HEK293T (cell line): ENCODE measurements at regions of chr1 and their contacts with region 1.

Region 1: DNA sequence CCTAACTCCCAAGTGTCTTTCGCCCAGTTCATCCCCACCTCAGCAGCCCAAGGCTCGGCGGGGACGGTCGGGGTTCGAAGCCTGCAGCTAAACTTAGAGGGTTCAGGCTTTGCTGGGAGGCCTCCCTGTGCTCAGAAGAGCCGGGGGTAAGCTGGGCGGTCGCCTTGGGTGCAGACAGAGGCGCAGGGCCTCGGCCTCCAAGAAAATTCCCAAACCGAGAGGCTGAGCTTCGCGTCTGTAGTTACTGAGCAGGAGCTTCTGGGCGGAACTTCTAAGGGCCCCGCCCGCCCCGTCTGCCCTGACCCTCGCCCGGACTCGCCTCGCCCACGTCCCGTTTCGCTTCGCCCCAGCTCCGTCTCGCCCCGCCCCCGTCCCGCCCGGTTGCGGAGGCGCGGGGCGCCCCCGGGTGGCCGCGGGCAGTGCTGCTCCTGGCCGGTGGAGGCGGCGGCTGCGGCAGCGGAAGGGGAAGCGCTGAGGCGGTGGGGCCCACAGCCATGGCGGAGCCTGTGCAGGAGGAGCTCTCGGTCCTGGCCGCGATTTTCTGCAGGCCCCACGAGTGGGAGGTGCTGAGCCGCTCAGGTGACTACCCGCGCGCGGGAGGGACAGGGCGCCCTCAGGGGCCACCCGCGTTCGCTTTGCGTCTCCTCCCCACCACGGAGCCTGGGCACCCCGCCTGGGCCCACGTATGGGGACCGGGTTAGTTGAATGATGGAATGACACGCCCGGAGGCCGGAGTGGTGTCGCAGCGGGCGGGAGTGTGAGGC is at the start of gene RWDD3:
- DNase-seq: peak; percentile 96

Region 2: GRCh38 chr1:95072532-95073419 is 161.1 kb before region 1 on chr1 and contains the start of gene ALG14:
- CTCF ChIA-PET with region 1: interaction called, 3 read pairs
- POLR2A ChIA-PET with region 1: interaction called, 19 read pairs
- DNase-seq: peak; percentile 95

Region 3: GRCh38 chr1:95084317-95085176 is 149.4 kb before region 1 on chr1:
- CTCF ChIA-PET with region 1: interaction called, 18 read pairs
- POLR2A ChIA-PET with region 1: interaction called, 15 read pairs
- DNase-seq: peak; percentile 67

Region 4: GRCh38 chr1:95116580-95117206 is 117.2 kb before region 1 on chr1:
- CTCF ChIA-PET with region 1: interaction called, 11 read pairs
- POLR2A ChIA-PET with region 1: interaction called, 13 read pairs
- DNase-seq: peak; percentile 85

Region 5: DNA sequence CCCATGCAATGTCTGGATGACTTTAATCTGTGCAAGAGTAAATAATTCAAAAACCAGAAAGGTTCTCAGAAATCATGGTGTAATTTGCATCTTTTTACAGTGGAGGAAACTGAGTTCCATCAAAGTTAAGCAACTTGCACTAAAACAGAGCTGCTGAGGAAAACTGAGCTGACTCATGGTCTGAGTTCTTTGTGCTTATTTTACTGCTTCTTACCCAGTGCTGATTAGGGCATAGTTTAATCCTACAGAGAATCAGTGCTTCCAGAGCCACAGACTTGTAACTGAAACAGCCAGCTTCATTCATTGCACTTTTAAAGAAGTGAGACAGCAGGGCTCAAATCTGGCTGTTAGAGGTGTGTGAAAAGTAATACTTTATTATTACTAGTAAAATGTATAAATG is 10.8 kb before region 1 on chr1:
- CTCF ChIA-PET with region 1: interaction called, 15 read pairs
- POLR2A ChIA-PET with region 1: interaction called, 3 read pairs
- DNase-seq: no peak

Region 6: DNA sequence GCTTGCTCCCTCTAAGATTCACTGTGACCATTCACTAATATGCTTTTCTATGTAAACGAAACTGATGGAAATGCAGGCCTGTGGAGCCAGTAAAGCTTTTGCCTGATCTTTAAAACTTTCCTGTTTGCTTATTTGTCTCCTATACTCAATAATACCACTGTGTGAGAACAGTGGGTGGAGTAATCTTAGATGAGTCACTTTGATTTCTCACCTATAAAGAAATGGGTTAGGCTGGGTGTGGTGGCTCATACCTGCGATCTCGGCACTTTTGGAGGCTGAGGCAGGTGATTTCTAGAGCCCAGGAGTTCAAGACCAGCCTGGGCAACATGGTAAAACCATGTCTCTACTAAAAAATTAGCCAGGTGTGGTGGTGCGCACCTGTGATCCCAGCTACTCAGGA is 70.9 kb after region 1 on chr1:
- CTCF ChIA-PET with region 1: no interaction called
- POLR2A ChIA-PET with region 1: no interaction called
- DNase-seq: no peak

Region 7: GRCh38 chr1:95575291-95575690 is 341.4 kb after region 1 on chr1:
- CTCF ChIA-PET with region 1: no interaction called
- POLR2A ChIA-PET with region 1: no interaction called
- DNase-seq: no peak